ENCODE measurements at regions of chr17 and their contacts with region 1.

Region 1: DNA sequence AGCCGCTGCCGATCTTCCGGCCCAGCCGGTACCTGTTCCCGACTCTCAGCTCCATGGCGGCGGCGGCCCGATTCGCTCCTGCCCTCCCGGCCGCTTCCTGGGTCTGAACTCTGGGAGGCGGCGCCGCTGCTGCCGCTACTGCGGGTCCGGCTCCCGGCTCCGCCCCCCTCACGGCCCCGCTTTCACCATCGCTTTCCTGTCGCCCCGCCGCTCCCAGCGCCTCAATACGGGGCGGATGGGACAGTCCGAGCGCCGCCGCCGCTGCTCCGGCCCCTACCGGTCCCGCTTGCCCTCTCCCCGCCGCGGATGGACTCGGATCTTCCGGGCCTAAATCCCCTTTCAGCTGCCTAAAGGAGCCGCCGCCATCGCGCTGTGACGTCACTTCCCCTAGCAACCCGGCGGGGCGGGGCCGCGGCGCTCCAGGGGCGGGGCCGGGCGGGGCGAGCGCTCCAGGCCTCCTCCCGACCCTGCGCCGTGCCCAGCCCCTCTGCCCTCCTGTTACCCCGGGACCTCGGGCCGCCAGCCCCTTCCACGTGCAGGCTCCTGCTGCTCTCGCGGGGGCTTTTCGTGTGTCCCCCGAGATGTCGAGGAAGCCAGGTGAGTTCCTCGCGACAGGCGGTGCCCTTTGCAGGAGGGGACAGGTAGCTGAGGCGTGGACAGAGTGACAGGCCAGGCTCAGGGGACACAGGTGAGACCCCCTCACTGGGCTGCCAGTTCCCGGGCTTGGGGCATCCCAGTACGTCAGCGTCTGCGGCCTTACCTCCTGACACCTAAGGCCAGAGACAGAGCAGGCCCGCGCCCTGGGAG is at the start of gene CSNK1D:
- DNase-seq: peak; percentile 83 to 97 (median 92)
- ATAC-seq: peak; percentile 90
- H3K4me3 ChIP-seq: peak within 1 kb of the TSS; percentile 60
- H3K4me3 Mint-ChIP-seq: peak within 1 kb of the TSS; percentile 80 to 97 (median 93)
- H3K27ac ChIP-seq: peak within 1 kb of the TSS; percentile 97
- H3K27ac Mint-ChIP-seq: peak within 1 kb of the TSS; percentile 92 to 99 (median 98)
- H3K4me1 ChIP-seq: peaks cover 37 to 42% of the 10 kb centered on the region in 2 donors
- H3K4me1 Mint-ChIP-seq: peaks cover 36 to 46% (median 41%) of the 10 kb centered on the region in 7 donors
- H3K27me3 ChIP-seq: no peaks in the 10 kb centered on the region
- H3K27me3 Mint-ChIP-seq: no peaks in the 10 kb centered on the region
- total RNA-seq, gene CSNK1D: 144 to 249 (median 176) TPM

Region 2: GRCh38 chr17:82037113-82037888 is 236.2 kb before region 1 on chr17 and contains the start of gene DCXR:
- CTCF ChIA-PET with region 1: no interaction called
- POLR2A ChIA-PET with region 1: no interaction called
- intact Hi-C with region 1: no loop called
- DNase-seq: peak; percentile 87 to 97 (median 93)
- ATAC-seq: peak; percentile 96
- H3K4me3 ChIP-seq: peak within 1 kb of the TSS; percentile 71
- H3K4me3 Mint-ChIP-seq: peak within 1 kb of the TSS; percentile 82 to 94 (median 89)
- H3K27ac ChIP-seq: peak within 1 kb of the TSS; percentile 75
- H3K27ac Mint-ChIP-seq: peak within 1 kb of the TSS; percentile 61 to 94 (median 90)
- H3K4me1 ChIP-seq: peaks cover 7% of the 10 kb centered on the region in 2 donors
- H3K4me1 Mint-ChIP-seq: peaks cover 14 to 29% (median 24%) of the 10 kb centered on the region in 7 donors
- H3K27me3 ChIP-seq: no peaks in the 10 kb centered on the region
- H3K27me3 Mint-ChIP-seq: no peaks in the 10 kb centered on the region
- total RNA-seq, gene DCXR: 63.0 to 130 (median 83.6) TPM

Region 3: DNA sequence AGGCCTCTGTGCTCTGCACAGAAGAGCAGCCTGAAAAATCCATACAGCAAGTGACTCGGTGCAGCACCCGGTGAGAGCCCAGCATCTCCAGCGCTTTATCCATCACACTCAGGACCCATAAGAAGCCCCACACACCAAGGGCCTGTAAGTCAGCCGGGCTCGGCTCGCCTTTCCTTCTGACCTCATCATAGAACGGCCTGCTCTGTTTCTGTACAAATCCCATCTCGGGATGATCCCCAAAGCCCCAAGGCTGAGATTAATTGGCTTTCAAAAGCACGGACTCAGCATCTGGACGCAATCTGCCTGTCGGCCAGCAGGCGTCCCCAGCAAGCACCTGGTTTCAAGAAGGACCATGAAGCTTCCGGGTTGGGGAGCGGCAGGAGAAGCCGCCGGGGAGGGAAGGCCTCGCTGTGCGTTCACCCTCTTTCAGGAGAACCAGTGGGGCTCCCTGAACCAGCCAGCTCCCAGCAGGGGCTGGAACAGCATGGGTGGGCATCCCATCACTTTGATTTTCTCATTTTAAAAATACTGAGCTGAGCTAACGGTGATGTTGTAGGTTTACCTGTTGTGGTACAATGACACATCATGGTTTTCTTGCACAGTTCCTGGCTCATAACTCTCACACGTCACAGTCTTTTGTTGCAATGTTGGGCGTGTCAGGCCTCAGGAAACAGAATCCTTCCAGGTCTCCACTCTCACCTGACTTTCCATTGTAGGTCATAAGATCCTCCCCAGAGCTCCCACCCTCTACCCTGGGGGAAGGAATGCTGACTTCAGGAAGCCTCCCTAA is 67.6 kb before region 1 on chr17:
- CTCF ChIA-PET with region 1: interaction called, 3 read pairs
- POLR2A ChIA-PET with region 1: interaction called, 3 read pairs
- intact Hi-C with region 1: loop called in 1 of 2 experiments (anchors 2 kb)
- DNase-seq: peak; percentile 67 to 87 (median 82)
- ATAC-seq: peak; percentile 88
- H3K4me3 ChIP-seq: no peak overlapping the region
- H3K4me3 Mint-ChIP-seq: peak overlapping the region in 9 of 10 donors; percentile 45 to 71 (median 58)
- H3K27ac ChIP-seq: peak overlapping the region; percentile 64
- H3K27ac Mint-ChIP-seq: peak overlapping the region; percentile 87 to 98 (median 95)
- H3K4me1 ChIP-seq: peaks cover 14 to 22% of the 10 kb centered on the region in 2 donors
- H3K4me1 Mint-ChIP-seq: peaks cover 24 to 61% (median 43%) of the 10 kb centered on the region in 7 donors
- H3K27me3 ChIP-seq: no peaks in the 10 kb centered on the region
- H3K27me3 Mint-ChIP-seq: no peaks in the 10 kb centered on the region

Region 4: GRCh38 chr17:82230627-82231311 is 42.8 kb before region 1 on chr17:
- CTCF ChIA-PET with region 1: no interaction called
- POLR2A ChIA-PET with region 1: no interaction called
- intact Hi-C with region 1: loop called in 1 of 2 experiments (anchors 2 kb)
- DNase-seq: peak in 2 of 9 donors; percentile 47 to 82
- ATAC-seq: peak; percentile 58
- H3K4me3 ChIP-seq: peak overlapping the region; percentile 35
- H3K4me3 Mint-ChIP-seq: peak overlapping the region in 7 of 10 donors; percentile 74 to 96 (median 79)
- H3K27ac ChIP-seq: peak overlapping the region; percentile 57
- H3K27ac Mint-ChIP-seq: no peak overlapping the region
- H3K4me1 ChIP-seq: peaks cover 26 to 32% of the 10 kb centered on the region in 2 donors
- H3K4me1 Mint-ChIP-seq: peaks cover 6 to 23% (median 10%) of the 10 kb centered on the region in 7 donors
- H3K27me3 ChIP-seq: no peaks in the 10 kb centered on the region
- H3K27me3 Mint-ChIP-seq: no peaks in the 10 kb centered on the region

Region 5: GRCh38 chr17:82236142-82236981 is 37.2 kb before region 1 on chr17:
- CTCF ChIA-PET with region 1: no interaction called
- POLR2A ChIA-PET with region 1: interaction called, 4 read pairs
- intact Hi-C with region 1: loop called (anchors 1 to 2 kb)
- DNase-seq: peak; percentile 58 to 77 (median 71)
- ATAC-seq: peak; percentile 66
- H3K4me3 ChIP-seq: no peak overlapping the region
- H3K4me3 Mint-ChIP-seq: peak overlapping the region in 1 of 10 donors; percentile 17
- H3K27ac ChIP-seq: peak overlapping the region; percentile 46
- H3K27ac Mint-ChIP-seq: peak overlapping the region in 5 of 9 donors; percentile 23 to 82 (median 51)
- H3K4me1 ChIP-seq: peaks cover 10 to 47% of the 10 kb centered on the region in 2 donors
- H3K4me1 Mint-ChIP-seq: peaks cover 5 to 47% (median 33%) of the 10 kb centered on the region in 7 donors
- H3K27me3 ChIP-seq: no peaks in the 10 kb centered on the region
- H3K27me3 Mint-ChIP-seq: no peaks in the 10 kb centered on the region

Region 6: DNA sequence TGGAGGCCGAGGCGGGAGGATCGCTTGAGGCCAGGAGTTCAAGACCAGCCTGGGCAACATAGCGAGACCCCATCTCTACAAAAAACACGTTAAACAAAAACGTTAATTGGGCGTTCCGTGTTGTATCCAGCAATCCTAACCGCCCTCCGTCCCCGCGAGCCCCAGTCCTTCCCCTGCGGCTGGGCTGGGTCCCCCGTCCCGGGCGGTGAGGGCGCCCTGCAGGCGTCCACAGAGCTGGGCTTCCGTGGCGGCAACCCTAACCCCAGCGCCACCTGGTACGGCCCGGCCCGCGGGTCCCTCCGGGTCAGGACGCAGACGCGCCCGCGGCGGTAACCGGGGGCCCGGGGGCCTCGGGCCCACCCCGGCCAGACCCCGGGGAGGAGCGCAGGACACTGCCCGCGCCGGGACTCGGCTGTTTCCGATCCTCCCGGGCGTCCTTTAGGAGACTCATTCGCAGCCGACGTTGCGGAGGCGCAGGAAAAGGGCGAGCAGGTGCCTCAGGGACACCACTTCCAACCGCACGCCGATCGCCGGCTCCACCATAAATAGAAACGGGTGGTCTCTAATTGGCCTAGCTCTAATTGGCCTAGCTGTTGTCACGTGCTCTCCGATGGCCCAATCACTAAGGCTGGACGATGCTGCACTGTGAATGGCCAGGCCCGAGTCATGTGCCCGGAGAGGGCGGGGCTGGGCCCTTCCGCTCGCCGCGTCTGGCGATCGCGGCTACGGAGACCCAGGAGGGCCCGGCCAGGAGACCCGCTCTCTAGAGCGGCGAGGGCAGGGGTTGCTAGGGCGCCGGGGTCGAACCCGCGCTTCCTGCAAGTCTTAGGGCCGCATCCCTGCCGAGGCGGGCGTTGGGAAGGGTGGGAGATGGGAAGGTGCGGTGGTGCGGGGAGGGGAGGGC is 19.0 kb after region 1 on chr17:
- CTCF ChIA-PET with region 1: interaction called, 3 read pairs
- POLR2A ChIA-PET with region 1: interaction called, 32 read pairs
- intact Hi-C with region 1: loop called (anchors 1 kb)
- DNase-seq: peak; percentile 76 to 94 (median 91)
- ATAC-seq: peak; percentile 95
- H3K4me3 ChIP-seq: peak overlapping the region; percentile 72
- H3K4me3 Mint-ChIP-seq: peak overlapping the region; percentile 83 to 94 (median 91)
- H3K27ac ChIP-seq: peak overlapping the region; percentile 99
- H3K27ac Mint-ChIP-seq: peak overlapping the region; percentile 86 to 96 (median 92)
- H3K4me1 ChIP-seq: peaks cover 18 to 21% of the 10 kb centered on the region in 2 donors
- H3K4me1 Mint-ChIP-seq: peaks cover 14 to 54% (median 43%) of the 10 kb centered on the region in 7 donors
- H3K27me3 ChIP-seq: no peaks in the 10 kb centered on the region
- H3K27me3 Mint-ChIP-seq: no peaks in the 10 kb centered on the region

Region 7: GRCh38 chr17:82315703-82316358 is 42.3 kb after region 1 on chr17:
- CTCF ChIA-PET with region 1: no interaction called
- POLR2A ChIA-PET with region 1: interaction called, 5 read pairs
- intact Hi-C with region 1: loop called (anchors 1 to 2 kb)
- DNase-seq: peak in 8 of 9 donors; percentile 48 to 72 (median 65)
- ATAC-seq: peak; percentile 63
- H3K4me3 ChIP-seq: peak overlapping the region; percentile 91
- H3K4me3 Mint-ChIP-seq: peak overlapping the region in 6 of 10 donors; percentile 88 to 99 (median 97)
- H3K27ac ChIP-seq: peak overlapping the region; percentile 91
- H3K27ac Mint-ChIP-seq: peak overlapping the region in 6 of 9 donors; percentile 77 to 97 (median 90)
- H3K4me1 ChIP-seq: peaks cover 10 to 13% of the 10 kb centered on the region in 2 donors
- H3K4me1 Mint-ChIP-seq: peaks cover 10 to 19% (median 15%) of the 10 kb centered on the region in 7 donors
- H3K27me3 ChIP-seq: no peaks in the 10 kb centered on the region
- H3K27me3 Mint-ChIP-seq: no peaks in the 10 kb centered on the region

Region 8: DNA sequence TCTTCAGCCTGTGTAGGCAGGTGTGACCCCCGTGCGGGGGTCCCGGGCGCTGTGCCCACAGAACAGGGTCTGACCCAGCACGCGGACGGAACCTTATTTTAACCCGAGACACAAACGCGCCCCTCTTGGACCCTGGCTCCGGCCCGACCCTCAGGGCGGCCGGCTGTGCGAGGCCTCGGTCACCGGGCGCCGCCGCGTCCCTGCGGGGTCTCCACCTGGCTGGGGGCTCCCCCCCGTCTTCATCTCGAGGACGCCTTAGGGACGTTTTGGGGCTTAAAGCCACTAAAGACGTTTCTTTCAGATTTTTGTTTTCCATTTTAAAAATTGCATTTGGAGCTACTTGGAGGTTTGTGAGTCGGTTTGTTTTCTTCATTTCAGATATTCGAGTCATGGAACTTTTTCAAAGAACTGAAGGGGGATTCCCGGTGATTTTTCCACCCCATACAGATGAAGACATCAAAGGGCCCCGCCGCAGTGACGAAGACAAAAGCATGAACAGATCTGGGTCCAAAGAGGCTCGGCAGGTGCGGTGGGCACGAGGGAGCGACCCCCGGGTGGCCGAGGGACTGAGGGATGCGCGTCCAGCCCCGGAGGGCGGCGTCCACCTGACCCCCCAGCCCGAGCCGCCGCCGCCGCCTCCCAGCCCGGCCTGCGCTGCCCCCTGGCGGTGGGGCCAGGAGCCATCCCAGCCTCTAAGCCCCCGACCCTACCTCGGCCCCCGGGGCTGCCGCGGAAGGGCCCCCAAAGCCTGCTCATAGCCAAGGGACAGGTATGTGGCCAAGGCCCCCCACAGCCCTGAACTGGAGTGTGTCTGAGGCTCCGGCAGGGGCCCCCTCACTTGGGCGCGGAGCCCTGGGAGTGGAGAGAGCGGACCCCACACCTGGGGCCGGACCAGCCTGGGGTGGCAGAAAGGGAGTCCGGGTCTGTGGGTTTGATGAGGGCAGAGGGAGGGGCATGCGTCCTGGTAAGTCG is 47.7 kb after region 1 on chr17:
- CTCF ChIA-PET with region 1: no interaction called
- POLR2A ChIA-PET with region 1: interaction called, 5 read pairs
- intact Hi-C with region 1: loop called (anchors 1 to 2 kb)
- DNase-seq: peak; percentile 70 to 95 (median 80)
- ATAC-seq: peak; percentile 69
- H3K4me3 ChIP-seq: peak overlapping the region; percentile 46
- H3K4me3 Mint-ChIP-seq: peak overlapping the region; percentile 58 to 87 (median 82)
- H3K27ac ChIP-seq: peak overlapping the region; percentile 77
- H3K27ac Mint-ChIP-seq: peak overlapping the region; percentile 75 to 97 (median 93)
- H3K4me1 ChIP-seq: peaks cover 13 to 20% of the 10 kb centered on the region in 2 donors
- H3K4me1 Mint-ChIP-seq: peaks cover 0 to 31% (median 16%) of the 10 kb centered on the region in 7 donors
- H3K27me3 ChIP-seq: no peaks in the 10 kb centered on the region
- H3K27me3 Mint-ChIP-seq: no peaks in the 10 kb centered on the region